Sciatic nerve (tissue), 2 donors: ENCODE measurements at regions of chr17 and their contacts with region 1.

Region 1: DNA sequence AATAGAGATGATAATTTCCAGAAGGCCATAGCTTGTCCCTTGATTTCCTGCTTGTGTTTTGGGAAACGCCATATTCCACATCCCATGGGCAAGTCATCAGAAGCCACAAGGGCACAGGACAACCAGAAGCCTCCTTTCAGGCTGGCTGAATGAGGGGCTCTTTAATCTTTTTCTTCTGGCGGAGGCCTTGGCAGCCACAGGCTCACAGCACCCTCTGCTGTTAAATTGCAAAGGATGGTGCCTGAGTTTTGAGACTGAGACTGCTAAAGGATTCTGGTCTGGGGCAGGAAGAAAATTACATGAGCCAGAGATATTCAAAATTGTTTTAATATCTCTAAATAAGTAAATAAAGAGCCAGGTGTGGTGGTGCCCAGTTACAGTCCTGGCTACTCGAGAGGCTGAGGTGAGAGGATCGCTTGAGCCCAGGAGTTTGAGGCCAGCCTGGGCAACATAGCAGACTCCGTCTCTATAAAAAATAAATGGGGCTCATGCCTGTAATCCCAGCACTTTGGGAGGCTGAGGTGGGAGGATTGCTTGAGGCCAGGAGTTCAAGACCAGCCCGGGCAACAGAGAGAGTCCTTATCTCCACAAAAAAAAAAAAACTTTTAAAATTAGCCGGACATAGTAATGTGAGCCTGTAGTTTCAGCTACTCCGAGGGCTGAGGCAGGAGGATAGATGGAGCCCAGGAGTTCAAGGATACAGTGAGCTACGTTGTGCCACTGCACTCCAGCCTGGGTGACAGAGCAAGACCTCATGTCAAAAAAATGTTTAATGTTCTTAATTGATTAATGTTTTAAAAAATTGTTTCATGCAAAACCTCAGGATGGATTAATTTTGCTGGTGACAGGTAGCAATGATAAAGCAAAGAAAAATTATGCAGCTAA is 26.3 kb downstream of the AARSD1 start:
- DNase-seq: peak; percentile 62
- ATAC-seq: peak; percentile 87

Region 2: DNA sequence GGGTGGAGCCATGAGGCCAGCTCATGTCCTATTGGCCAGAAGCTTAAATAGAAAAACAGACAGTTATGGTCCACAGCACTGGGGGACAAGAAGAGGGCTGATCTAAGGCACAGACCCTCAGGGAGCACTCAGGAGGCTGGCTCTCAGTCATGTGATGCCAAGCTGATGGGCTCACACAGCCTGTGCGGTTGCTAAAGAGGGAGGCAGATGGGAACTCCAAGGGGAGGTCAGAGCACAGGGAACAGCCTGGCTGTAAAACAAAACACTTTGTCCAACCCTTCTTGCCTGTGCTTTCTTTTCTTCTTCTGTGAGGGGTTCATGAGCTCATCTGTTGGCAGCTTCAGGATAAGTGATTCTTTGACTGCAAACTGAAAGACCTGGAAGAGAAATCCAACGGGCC is 228.4 kb before region 1 on chr17:
- intact Hi-C with region 1: no loop called
- DNase-seq: no peak
- ATAC-seq: peak; percentile 77

Region 3: GRCh38 chr17:42843358-42843934 is 94.5 kb before region 1 on chr17:
- intact Hi-C with region 1: loop called (anchors 10 kb)
- DNase-seq: no peak
- ATAC-seq: peak; percentile 81

Region 4: DNA sequence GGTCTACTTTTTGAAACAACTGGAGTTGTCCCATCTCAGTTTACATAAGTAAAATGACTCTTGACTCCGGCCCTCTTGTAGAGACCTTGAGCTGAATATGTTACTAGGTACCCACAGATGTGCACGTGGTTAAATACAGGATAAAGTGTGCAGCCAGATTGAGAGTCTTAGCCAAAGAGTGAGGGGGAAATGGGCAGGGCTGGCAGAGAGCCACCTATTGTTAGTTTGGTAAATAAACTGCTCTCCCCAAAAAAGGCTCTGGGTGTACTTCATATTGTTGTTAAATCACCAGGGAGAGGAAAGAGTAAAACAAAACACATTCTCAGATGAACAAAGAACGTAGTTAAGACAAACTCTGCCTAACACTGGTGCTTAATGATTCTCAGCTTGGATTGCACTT is 17.0 kb before region 1 on chr17:
- intact Hi-C with region 1: no loop called
- DNase-seq: no peak
- ATAC-seq: peak; percentile 34